ENCODE measurements at regions of chr15 and their contacts with region 1.

Region 1: GRCh38 chr15:68674975-68675374 is 96.2 kb downstream of the CORO2B start:
- DNase-seq: no peak
- ATAC-seq: peak in 1 of 3 donors; percentile 41
- H3K4me3 ChIP-seq: no peak overlapping the region
- H3K4me3 Mint-ChIP-seq: no peak overlapping the region
- H3K27ac ChIP-seq: no peak overlapping the region
- H3K27ac Mint-ChIP-seq: no peak overlapping the region
- H3K4me1 ChIP-seq: peaks cover 9% of the 10 kb centered on the region
- H3K4me1 Mint-ChIP-seq: peaks cover 0 to 6% of the 10 kb centered on the region in 2 donors
- H3K27me3 ChIP-seq: no peaks in the 10 kb centered on the region
- H3K27me3 Mint-ChIP-seq: peaks cover 7 to 15% of the 10 kb centered on the region in 2 donors
- CTCF ChIP-seq: no peak

Region 2: DNA sequence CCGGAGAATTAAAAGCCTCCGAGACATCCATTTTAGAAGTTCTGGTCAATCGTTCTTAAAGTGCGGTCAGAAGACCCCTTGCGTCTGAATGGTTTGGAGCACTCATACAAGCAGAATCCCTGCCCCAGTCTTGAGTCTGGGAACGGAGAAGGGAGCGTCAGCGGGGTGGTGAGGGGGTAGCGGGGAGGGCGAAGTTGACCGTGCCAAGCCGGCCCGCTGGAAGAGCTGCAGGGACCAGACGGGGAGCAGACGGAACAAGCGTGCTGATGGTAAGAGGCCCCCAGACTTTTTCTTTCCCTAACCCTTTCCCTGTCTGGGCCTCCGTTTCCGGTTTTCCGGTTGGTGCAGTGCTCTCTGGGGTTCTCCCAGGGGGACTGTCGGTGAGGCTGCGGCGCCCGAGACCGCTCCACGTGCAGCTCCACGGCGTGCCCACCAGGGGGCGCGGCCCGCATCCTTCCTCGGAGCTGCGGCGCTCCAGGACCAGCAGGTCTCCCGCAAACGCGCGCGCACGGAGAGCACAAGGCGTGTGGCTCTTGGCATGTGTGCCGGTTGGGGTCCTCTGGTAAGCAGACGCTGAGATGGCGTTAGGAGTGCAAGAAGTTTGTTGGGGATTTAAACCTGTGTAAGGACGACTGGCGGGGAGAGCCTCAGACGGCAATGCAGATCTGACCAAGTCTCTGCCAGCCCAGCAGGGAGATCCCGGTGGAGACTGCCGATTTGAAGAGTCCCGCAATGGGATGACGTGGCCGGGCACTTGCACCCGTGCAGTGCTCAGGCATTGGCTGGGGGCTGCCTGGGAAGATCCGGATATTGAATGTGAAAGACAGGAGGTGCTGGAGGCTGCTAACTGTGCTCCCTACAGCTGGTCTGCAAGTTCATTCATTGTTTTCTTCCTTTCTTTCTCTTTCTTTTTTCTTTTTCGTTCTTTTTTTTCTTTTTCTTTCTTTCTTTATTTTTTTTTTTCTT is 115.3 kb before region 1 on chr15:
- intact Hi-C with region 1: loop called (anchors 2 kb)
- DNase-seq: peak; percentile 67 to 82
- ATAC-seq: peak; percentile 85 to 97 (median 97)
- H3K4me3 ChIP-seq: no peak overlapping the region
- H3K4me3 Mint-ChIP-seq: peak overlapping the region; percentile 75
- H3K27ac ChIP-seq: no peak overlapping the region
- H3K27ac Mint-ChIP-seq: no peak overlapping the region
- H3K4me1 ChIP-seq: peaks cover 15% of the 10 kb centered on the region
- H3K4me1 Mint-ChIP-seq: peaks cover 16 to 23% of the 10 kb centered on the region in 2 donors
- H3K27me3 ChIP-seq: peaks cover 17% of the 10 kb centered on the region
- H3K27me3 Mint-ChIP-seq: peaks cover 49% of the 10 kb centered on the region in 2 donors
- CTCF ChIP-seq: peak; percentile 97

Measured in natural killer cell (primary cell).